Caco-2 (cell line): ENCODE measurements at regions of chr3 and their contacts with region 1.

Region 1: GRCh38 chr3:136042608-136043221 is 77.2 kb downstream of the PPP2R3A start:
- DNase-seq: peak in 1 of 2 experiments; percentile 44
- H3K4me3 ChIP-seq: no peak overlapping the region
- H3K4me3 Mint-ChIP-seq: no peak overlapping the region
- H3K27ac Mint-ChIP-seq: no peak overlapping the region
- H3K4me1 ChIP-seq: no peaks in the 10 kb centered on the region
- H3K4me1 Mint-ChIP-seq: no peaks in the 10 kb centered on the region
- H3K27me3 ChIP-seq: no peaks in the 10 kb centered on the region
- H3K27me3 Mint-ChIP-seq: no peaks in the 10 kb centered on the region
- CTCF ChIP-seq: peak; percentile 57

Region 2: GRCh38 chr3:135736740-135737139 is 306.0 kb before region 1 on chr3:
- CTCF ChIA-PET with region 1: interaction called, 3 read pairs
- POLR2A ChIA-PET with region 1: no interaction called
- intact Hi-C with region 1: loop called (anchors 2 kb)
- DNase-seq: peak in 1 of 2 experiments; percentile 4
- H3K4me3 ChIP-seq: no peak overlapping the region
- H3K4me3 Mint-ChIP-seq: no peak overlapping the region
- H3K27ac Mint-ChIP-seq: no peak overlapping the region
- H3K4me1 ChIP-seq: no peaks in the 10 kb centered on the region
- H3K4me1 Mint-ChIP-seq: no peaks in the 10 kb centered on the region
- H3K27me3 ChIP-seq: no peaks in the 10 kb centered on the region
- H3K27me3 Mint-ChIP-seq: peaks cover 28% of the 10 kb centered on the region
- CTCF ChIP-seq: peak in 1 of 2 experiments; percentile 12

Region 3: DNA sequence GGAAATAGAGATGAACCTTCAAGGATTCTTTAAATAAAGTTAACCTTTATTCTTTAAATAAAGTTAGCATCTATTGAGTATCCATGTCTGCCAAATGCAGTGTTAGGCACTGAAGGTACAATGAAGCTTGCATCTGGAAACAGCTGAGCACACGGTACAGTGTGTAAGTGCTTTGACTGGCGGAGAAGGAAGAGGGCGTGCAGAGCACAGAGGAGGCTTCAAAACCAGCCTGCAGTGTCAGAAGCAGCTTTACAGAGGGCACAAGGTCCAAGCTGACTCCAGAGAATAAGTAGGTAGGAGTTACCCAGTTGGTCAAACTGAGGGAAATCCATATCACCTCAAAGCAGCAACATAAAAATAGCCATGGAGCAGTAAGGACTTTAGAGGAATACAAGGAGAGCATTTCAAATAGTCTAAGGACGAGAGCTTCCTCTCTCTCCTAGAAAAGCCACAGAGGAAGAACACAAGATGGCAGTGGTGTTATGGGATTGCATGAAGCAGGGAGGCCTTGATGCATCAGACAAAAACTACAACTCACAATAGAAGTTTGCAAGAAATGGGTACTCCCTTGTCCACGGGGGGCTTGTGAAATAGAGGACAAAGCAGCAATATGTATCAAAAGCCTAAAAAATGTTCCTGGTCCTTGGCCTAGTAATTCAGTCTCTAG is 137.5 kb before region 1 on chr3:
- CTCF ChIA-PET with region 1: interaction called, 11 read pairs
- POLR2A ChIA-PET with region 1: no interaction called
- intact Hi-C with region 1: loop called (anchors 1 kb)
- DNase-seq: peak in 1 of 2 experiments; percentile 11
- H3K4me3 ChIP-seq: no peak overlapping the region
- H3K4me3 Mint-ChIP-seq: no peak overlapping the region
- H3K27ac Mint-ChIP-seq: no peak overlapping the region
- H3K4me1 ChIP-seq: no peaks in the 10 kb centered on the region
- H3K4me1 Mint-ChIP-seq: no peaks in the 10 kb centered on the region
- H3K27me3 ChIP-seq: no peaks in the 10 kb centered on the region
- H3K27me3 Mint-ChIP-seq: peaks cover 2% of the 10 kb centered on the region
- CTCF ChIP-seq: peak; percentile 8 to 30

Region 4: GRCh38 chr3:135918580-135918962 is 124.1 kb before region 1 on chr3:
- CTCF ChIA-PET with region 1: interaction called, 11 read pairs
- POLR2A ChIA-PET with region 1: no interaction called
- intact Hi-C with region 1: loop called (anchors 1 kb)
- DNase-seq: peak in 1 of 2 experiments; percentile 4
- H3K4me3 ChIP-seq: no peak overlapping the region
- H3K4me3 Mint-ChIP-seq: no peak overlapping the region
- H3K27ac Mint-ChIP-seq: no peak overlapping the region
- H3K4me1 ChIP-seq: no peaks in the 10 kb centered on the region
- H3K4me1 Mint-ChIP-seq: no peaks in the 10 kb centered on the region
- H3K27me3 ChIP-seq: no peaks in the 10 kb centered on the region
- H3K27me3 Mint-ChIP-seq: no peaks in the 10 kb centered on the region
- CTCF ChIP-seq: peak; percentile 25 to 47

Region 5: DNA sequence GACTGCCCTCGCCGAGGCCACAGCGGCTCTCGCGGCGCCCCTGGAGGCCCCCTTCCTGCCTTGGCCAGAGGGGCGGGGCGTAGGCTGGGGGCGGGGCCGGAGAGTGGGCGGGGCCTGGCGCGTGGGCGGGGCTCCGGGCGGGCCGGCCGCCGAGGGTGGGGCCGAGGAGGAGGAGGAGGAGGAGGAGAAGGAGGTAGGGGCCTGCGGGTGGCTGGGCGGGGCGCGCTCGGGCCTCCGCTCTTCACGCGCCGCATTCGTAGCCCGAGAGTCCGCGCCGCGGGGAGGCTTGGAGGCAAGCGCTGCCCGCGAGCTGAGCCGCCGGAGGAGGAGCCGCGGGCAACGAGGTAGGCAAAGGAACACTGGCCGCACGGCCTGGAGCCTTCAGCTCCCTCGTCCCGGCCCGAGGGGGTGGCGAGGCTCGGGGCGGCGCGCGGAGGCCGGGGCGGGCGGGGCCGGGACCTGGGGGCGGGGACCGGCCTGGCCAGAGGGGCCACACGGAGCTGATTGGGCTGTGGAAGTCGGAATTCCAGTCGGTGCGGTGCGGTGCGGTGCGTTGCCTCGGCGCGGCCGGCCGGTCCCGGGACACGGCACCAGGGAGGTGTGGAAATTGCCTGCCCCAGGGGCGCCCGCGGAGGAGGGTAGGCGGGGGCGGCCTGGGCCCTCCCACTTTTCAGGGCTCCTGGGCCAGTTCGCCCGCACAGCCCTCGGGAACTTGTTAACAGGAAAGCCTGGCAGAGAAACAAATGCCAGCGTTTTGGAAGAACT is 77.0 kb before region 1 on chr3 and contains the start of gene PPP2R3A:
- CTCF ChIA-PET with region 1: interaction called, 11 read pairs
- POLR2A ChIA-PET with region 1: interaction called, 6 read pairs
- intact Hi-C with region 1: loop called (anchors 2 kb)
- DNase-seq: peak; percentile 87 to 88
- H3K4me3 ChIP-seq: peak within 1 kb of the TSS; percentile 54
- H3K4me3 Mint-ChIP-seq: peak within 1 kb of the TSS; percentile 75
- H3K27ac Mint-ChIP-seq: peak within 1 kb of the TSS; percentile 79
- H3K4me1 ChIP-seq: peaks cover 36% of the 10 kb centered on the region
- H3K4me1 Mint-ChIP-seq: peaks cover 35% of the 10 kb centered on the region
- H3K27me3 ChIP-seq: no peaks in the 10 kb centered on the region
- H3K27me3 Mint-ChIP-seq: no peaks in the 10 kb centered on the region
- CTCF ChIP-seq: no peak
- total RNA-seq, gene PPP2R3A: 9.5 and 10.2 TPM in 2 replicates

Region 6: GRCh38 chr3:136008701-136009465 is 33.8 kb before region 1 on chr3:
- CTCF ChIA-PET with region 1: no interaction called
- POLR2A ChIA-PET with region 1: no interaction called
- intact Hi-C with region 1: no loop called
- DNase-seq: no peak
- H3K4me3 ChIP-seq: no peak overlapping the region
- H3K4me3 Mint-ChIP-seq: no peak overlapping the region
- H3K27ac Mint-ChIP-seq: peak overlapping the region; percentile 2
- H3K4me1 ChIP-seq: peaks cover 17% of the 10 kb centered on the region
- H3K4me1 Mint-ChIP-seq: peaks cover 22% of the 10 kb centered on the region
- H3K27me3 ChIP-seq: no peaks in the 10 kb centered on the region
- H3K27me3 Mint-ChIP-seq: no peaks in the 10 kb centered on the region
- CTCF ChIP-seq: no peak